Posterior cingulate gyrus (tissue), 11 donors: ENCODE measurements at regions of chr3 and their contacts with region 1.

Region 1: DNA sequence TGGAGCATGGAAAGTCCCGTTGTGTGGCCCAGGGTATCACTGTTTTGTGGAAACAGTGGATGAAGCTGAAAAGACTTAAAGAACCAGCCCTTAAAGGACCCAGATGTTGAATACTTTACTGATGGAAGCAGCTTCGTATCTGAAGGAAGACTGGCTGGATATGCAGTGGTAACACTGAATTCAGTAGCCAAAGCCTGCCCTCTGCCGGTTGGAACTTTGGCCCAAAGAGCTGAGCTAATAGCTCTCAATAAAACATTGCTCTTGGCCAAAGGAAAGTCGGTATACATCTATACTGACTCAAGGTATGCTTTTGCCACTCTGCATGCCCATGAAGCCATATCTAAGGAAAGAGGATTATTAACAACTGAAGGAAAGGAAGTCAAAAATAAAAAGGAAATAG is 885.4 kb downstream of the PDCD6IP start:
- DNase-seq: peak in 8 of 10 donors; percentile 47 to 89 (median 65)

Region 2: DNA sequence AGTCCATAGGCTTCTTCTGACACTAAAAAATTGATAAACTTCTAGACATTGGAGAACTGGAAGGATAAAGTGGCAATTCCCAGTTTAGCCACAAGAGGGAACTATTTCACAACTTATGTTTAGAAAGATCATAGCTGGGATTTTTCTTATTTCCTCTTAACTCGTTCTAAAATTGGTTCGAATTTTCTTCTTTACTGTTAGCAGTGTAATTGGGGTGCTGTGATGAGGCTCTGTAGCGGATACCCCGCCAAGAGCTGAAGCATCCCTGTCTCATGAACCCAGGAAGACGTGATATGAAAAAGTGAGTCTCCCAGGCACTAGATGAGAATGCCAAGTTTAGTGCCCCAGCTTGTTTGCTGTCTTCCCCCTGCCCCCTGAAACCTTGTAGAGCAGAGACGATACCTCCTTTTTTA is 800.3 kb before region 1 on chr3:
- intact Hi-C with region 1: loop called (anchors 5 kb)
- DNase-seq: peak in 1 of 10 donors; percentile 8

Region 3: DNA sequence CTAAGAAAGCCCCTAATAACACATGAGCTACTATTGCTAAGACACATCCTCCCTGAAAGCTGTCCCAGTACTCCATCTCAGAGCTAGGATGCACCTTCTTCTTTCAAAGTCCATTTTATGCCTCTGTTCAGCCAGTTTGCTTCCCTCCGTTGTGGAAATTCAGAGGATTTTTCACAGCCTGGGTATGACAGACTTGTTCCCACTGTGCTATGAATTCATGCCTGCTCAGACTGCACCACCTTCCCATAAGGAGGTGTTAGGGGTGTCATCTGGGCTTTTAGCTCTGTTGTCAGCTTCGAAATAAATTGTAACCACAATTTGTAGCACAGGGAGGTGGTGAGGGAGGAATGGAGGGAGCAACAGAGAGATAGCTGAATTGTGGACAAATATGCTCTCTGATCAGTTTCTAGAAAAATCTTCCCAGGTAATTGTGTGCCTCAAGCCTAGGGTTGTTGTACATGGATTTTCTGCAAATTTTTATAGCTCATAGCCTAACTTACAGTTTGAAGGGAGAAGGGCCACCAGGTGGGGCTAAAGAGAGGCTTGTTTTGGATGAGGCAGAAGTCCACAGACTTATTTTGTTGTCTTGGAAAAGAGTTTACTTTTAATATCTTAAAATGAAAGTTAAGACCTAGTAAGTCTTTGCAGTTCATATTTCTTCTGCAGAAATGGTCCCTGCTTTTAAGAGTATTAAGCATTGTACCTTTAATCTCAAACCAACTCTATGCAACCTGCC is 423.4 kb before region 1 on chr3:
- intact Hi-C with region 1: loop called (anchors 5 kb)
- DNase-seq: peak in 7 of 10 donors; percentile 35 to 92 (median 69)